ENCODE measurements at regions of chr2 and their contacts with region 1.

Region 1: GRCh38 chr2:113198790-113199612 is 25.2 kb downstream of the PSD4 start:
- DNase-seq: peak; percentile 75
- ATAC-seq: peak; percentile 74
- H3K4me3 Mint-ChIP-seq: no peak overlapping the region
- H3K27ac Mint-ChIP-seq: no peak overlapping the region
- H3K4me1 Mint-ChIP-seq: peaks cover 9% of the 10 kb centered on the region
- H3K27me3 Mint-ChIP-seq: no peaks in the 10 kb centered on the region
- CTCF ChIP-seq: peak; percentile 69

Region 2: DNA sequence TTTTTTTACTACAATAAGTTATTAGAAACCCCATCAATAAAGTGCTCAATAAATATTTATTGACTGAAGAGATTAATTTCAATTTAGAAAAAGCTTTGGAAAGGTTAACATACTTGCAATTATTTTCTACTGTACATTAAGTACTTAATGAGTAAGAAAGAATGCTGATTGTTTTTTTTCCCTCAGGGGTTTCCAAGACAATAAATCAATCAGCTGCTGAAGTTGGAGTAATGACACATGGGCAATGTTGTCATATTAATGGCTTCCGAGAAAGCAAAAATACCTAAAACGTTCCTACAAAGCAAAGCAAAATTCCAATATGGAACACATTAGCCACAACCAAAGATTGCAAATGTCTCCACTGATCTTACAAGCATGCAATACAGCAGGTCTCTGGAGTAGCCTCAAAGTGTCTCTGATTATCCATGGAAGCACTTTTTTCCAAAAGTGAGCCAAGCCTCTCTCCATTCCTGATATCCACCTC is 856.9 kb before region 1 on chr2:
- CTCF ChIA-PET with region 1: no interaction called
- POLR2A ChIA-PET with region 1: no interaction called
- intact Hi-C with region 1: no loop called
- DNase-seq: no peak
- ATAC-seq: no peak
- H3K4me3 Mint-ChIP-seq: no peak overlapping the region
- H3K27ac Mint-ChIP-seq: no peak overlapping the region
- H3K4me1 Mint-ChIP-seq: peaks cover 3% of the 10 kb centered on the region
- H3K27me3 Mint-ChIP-seq: peaks cover 3% of the 10 kb centered on the region
- CTCF ChIP-seq: no peak

Region 3: GRCh38 chr2:113173542-113174395 is 25.2 kb before region 1 on chr2 and contains the start of gene PSD4:
- CTCF ChIA-PET with region 1: interaction called, 44 read pairs
- POLR2A ChIA-PET with region 1: interaction called, 16 read pairs
- intact Hi-C with region 1: no loop called
- DNase-seq: peak; percentile 95
- ATAC-seq: peak; percentile 77
- H3K4me3 Mint-ChIP-seq: peak within 1 kb of the TSS; percentile 84
- H3K27ac Mint-ChIP-seq: peak within 1 kb of the TSS; percentile 98
- H3K4me1 Mint-ChIP-seq: peaks cover 68% of the 10 kb centered on the region
- H3K27me3 Mint-ChIP-seq: no peaks in the 10 kb centered on the region
- CTCF ChIP-seq: no peak
- total RNA-seq, gene PSD4: 247 to 251 TPM

Region 4: GRCh38 chr2:113181258-113182051 is 17.5 kb before region 1 on chr2:
- CTCF ChIA-PET with region 1: interaction called, 44 read pairs
- POLR2A ChIA-PET with region 1: interaction called, 22 read pairs
- intact Hi-C with region 1: no loop called
- DNase-seq: no peak
- ATAC-seq: peak; percentile 10
- H3K4me3 Mint-ChIP-seq: peak overlapping the region; percentile 84
- H3K27ac Mint-ChIP-seq: peak overlapping the region; percentile 79
- H3K4me1 Mint-ChIP-seq: peaks cover 90% of the 10 kb centered on the region
- H3K27me3 Mint-ChIP-seq: no peaks in the 10 kb centered on the region
- CTCF ChIP-seq: no peak

Measured in activated CD8-positive, alpha-beta T cell treated with anti-CD3 and anti-CD28 coated beads for 36 hours (primary cell).